Calu3 (cell line): ENCODE measurements at regions of chr13 and their contacts with region 1.

Region 1: DNA sequence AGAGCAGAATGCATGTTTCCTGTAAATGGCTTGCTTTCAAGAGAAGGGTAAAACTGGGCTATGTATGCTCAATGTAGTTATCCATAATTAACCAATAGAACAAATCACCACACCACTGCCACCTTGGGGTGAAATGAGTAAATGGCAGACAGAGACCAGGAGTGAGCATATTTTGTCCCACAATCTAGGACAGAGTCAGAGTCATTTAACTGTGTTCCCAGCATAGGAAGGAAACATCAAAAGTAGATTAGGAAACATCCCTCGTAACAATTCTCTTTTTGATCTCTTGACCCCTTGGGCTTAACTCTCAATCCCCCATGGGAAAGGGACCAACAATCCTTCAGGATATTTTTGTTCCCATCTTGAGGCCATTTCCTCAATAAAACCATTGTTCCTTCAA is 224.8 kb downstream of the NHLRC3 start:
- DNase-seq: peak; percentile 42
- H3K4me3 Mint-ChIP-seq: no peak overlapping the region
- H3K27ac Mint-ChIP-seq: no peak overlapping the region
- H3K4me1 Mint-ChIP-seq: no peaks in the 10 kb centered on the region
- H3K27me3 Mint-ChIP-seq: peaks cover 3% of the 10 kb centered on the region
- CTCF ChIP-seq: peak; percentile 19

Region 2: GRCh38 chr13:39051157-39051556 is 211.9 kb before region 1 on chr13:
- CTCF ChIA-PET with region 1: interaction called, 3 read pairs
- intact Hi-C with region 1: loop called (anchors 2 kb)
- DNase-seq: no peak
- H3K4me3 Mint-ChIP-seq: no peak overlapping the region
- H3K27ac Mint-ChIP-seq: no peak overlapping the region
- H3K4me1 Mint-ChIP-seq: no peaks in the 10 kb centered on the region
- H3K27me3 Mint-ChIP-seq: no peaks in the 10 kb centered on the region
- CTCF ChIP-seq: no peak

Region 3: DNA sequence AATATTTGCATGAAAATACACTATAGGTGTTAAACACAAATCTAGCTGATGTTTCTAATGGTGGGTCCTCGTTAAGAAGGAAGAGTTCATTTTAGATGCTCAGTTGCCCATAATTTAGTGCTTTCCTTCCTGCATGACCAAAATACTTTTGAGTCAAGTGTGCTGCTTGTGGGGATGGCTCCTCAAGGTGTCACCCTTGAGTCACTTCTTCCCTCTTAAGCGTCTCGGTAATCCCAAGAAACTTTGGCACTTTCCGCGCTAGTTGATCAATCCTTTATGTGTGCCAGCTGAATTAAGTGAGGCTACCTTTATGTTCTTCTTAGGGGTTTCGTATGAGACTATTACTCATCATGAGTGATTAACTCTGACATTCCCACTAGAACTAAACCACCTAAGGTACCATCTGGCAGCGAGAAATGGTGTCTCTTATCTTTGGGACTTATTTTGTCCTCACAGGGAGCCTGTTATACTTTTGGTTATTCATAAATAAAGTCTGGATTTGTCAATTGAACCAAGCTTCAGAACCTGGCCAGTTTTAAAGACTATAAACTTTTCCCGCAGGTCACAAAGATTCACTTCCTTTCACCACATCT is 118.0 kb before region 1 on chr13:
- CTCF ChIA-PET with region 1: no interaction called
- intact Hi-C with region 1: loop called (anchors 2 kb)
- DNase-seq: peak; percentile 45
- H3K4me3 Mint-ChIP-seq: no peak overlapping the region
- H3K27ac Mint-ChIP-seq: no peak overlapping the region
- H3K4me1 Mint-ChIP-seq: peaks cover 8% of the 10 kb centered on the region
- H3K27me3 Mint-ChIP-seq: peaks cover 59% of the 10 kb centered on the region
- CTCF ChIP-seq: peak; percentile 32

Region 4: GRCh38 chr13:39226359-39226758 is 36.7 kb before region 1 on chr13:
- CTCF ChIA-PET with region 1: no interaction called
- intact Hi-C with region 1: no loop called
- DNase-seq: no peak
- H3K4me3 Mint-ChIP-seq: no peak overlapping the region
- H3K27ac Mint-ChIP-seq: no peak overlapping the region
- H3K4me1 Mint-ChIP-seq: no peaks in the 10 kb centered on the region
- H3K27me3 Mint-ChIP-seq: peaks cover 18% of the 10 kb centered on the region
- CTCF ChIP-seq: no peak

Region 5: GRCh38 chr13:39577838-39578491 is 314.9 kb after region 1 on chr13:
- CTCF ChIA-PET with region 1: no interaction called
- intact Hi-C with region 1: no loop called
- DNase-seq: no peak
- H3K4me3 Mint-ChIP-seq: no peak overlapping the region
- H3K27ac Mint-ChIP-seq: no peak overlapping the region
- H3K4me1 Mint-ChIP-seq: no peaks in the 10 kb centered on the region
- H3K27me3 Mint-ChIP-seq: no peaks in the 10 kb centered on the region
- CTCF ChIP-seq: no peak